ENCODE measurements at regions of chr11 and their contacts with region 1.

Region 1: GRCh38 chr11:2532704-2533586 is 88.1 kb downstream of the KCNQ1 start:
- DNase-seq: peak; percentile 86 to 97 (median 92)
- ATAC-seq: peak; percentile 89
- H3K4me3 ChIP-seq: peak overlapping the region; percentile 33
- H3K4me3 Mint-ChIP-seq: peak overlapping the region; percentile 77
- H3K27ac ChIP-seq: no peak overlapping the region
- H3K27ac Mint-ChIP-seq: no peak overlapping the region
- H3K4me1 ChIP-seq: peaks cover 31% of the 10 kb centered on the region
- H3K4me1 Mint-ChIP-seq: peaks cover 25% of the 10 kb centered on the region
- H3K27me3 ChIP-seq: no peaks in the 10 kb centered on the region
- H3K27me3 Mint-ChIP-seq: no peaks in the 10 kb centered on the region
- CTCF ChIP-seq: peak; percentile 99

Region 2: DNA sequence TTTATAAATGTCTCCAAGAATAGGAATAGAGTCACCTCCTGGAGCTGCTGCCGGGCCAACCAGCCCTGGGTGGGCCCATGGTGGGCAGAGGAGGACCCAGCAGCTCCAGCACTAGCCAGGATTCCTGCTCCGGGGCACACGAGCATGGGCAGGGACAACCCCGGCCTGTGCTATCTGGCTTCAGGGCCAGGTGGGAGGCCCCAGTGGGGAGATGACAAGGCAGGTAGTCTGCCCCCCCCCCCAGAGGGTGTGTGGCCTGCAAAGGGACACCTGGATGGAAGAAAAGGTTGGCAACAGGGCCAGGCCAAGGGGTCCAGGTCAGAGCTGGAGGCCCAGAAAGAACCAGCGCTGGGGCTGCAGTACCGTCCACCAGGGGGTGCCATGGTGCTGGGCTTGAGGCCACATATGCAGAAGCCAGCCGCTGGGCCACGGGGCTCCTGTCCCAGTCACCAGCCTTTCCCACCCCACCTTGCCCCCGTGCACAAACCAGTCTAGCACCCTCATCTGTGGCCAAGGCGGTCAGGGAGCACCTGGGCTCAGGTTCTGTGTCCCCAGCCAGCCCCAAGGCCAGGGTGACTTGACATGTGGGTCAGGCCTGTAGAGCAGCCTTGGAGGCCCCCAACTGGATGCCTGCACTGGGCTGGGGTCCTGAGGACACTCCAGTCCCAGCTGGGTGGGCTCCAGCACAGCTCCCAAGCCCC is 227.7 kb before region 1 on chr11:
- CTCF ChIA-PET with region 1: interaction called, 9 read pairs
- POLR2A ChIA-PET with region 1: no interaction called
- intact Hi-C with region 1: loop called in 1 of 2 experiments (anchors 2 kb)
- DNase-seq: peak; percentile 61 to 93 (median 82)
- ATAC-seq: peak; percentile 23
- H3K4me3 ChIP-seq: peak overlapping the region; percentile 47
- H3K4me3 Mint-ChIP-seq: peak overlapping the region; percentile 80
- H3K27ac ChIP-seq: peak overlapping the region; percentile 40 to 72
- H3K27ac Mint-ChIP-seq: peak overlapping the region; percentile 94
- H3K4me1 ChIP-seq: peaks cover 71% of the 10 kb centered on the region
- H3K4me1 Mint-ChIP-seq: peaks cover 60% of the 10 kb centered on the region
- H3K27me3 ChIP-seq: no peaks in the 10 kb centered on the region
- H3K27me3 Mint-ChIP-seq: no peaks in the 10 kb centered on the region
- CTCF ChIP-seq: peak; percentile 50

Region 3: GRCh38 chr11:2444821-2445745 is 87.9 kb before region 1 on chr11 and contains the start of gene KCNQ1:
- CTCF ChIA-PET with region 1: interaction called, 19 read pairs
- POLR2A ChIA-PET with region 1: interaction called, 5 read pairs
- intact Hi-C with region 1: loop called in 1 of 2 experiments (anchors 5 kb)
- DNase-seq: peak in 7 of 14 experiments; percentile 11 to 80 (median 52)
- ATAC-seq: peak; percentile 22
- H3K4me3 ChIP-seq: peak within 1 kb of the TSS; percentile 75
- H3K4me3 Mint-ChIP-seq: peak within 1 kb of the TSS; percentile 96
- H3K27ac ChIP-seq: peak within 1 kb of the TSS in 1 of 2 donors; percentile 4
- H3K27ac Mint-ChIP-seq: peak within 1 kb of the TSS; percentile 86
- H3K4me1 ChIP-seq: peaks cover 70% of the 10 kb centered on the region
- H3K4me1 Mint-ChIP-seq: peaks cover 50% of the 10 kb centered on the region
- H3K27me3 ChIP-seq: no peaks in the 10 kb centered on the region
- H3K27me3 Mint-ChIP-seq: no peaks in the 10 kb centered on the region
- CTCF ChIP-seq: no peak
- total RNA-seq, gene KCNQ1: 31.3 to 33.1 TPM

Region 4: GRCh38 chr11:2901854-2902783 is 369.2 kb after region 1 on chr11:
- CTCF ChIA-PET with region 1: interaction called, 10 read pairs
- POLR2A ChIA-PET with region 1: interaction called, 5 read pairs
- intact Hi-C with region 1: no loop called
- DNase-seq: peak; percentile 71 to 96 (median 87)
- ATAC-seq: peak; percentile 83
- H3K4me3 ChIP-seq: peak overlapping the region; percentile 69
- H3K4me3 Mint-ChIP-seq: peak overlapping the region; percentile 86
- H3K27ac ChIP-seq: peak overlapping the region; percentile 18 to 50
- H3K27ac Mint-ChIP-seq: peak overlapping the region; percentile 44
- H3K4me1 ChIP-seq: peaks cover 54% of the 10 kb centered on the region
- H3K4me1 Mint-ChIP-seq: peaks cover 49% of the 10 kb centered on the region
- H3K27me3 ChIP-seq: no peaks in the 10 kb centered on the region
- H3K27me3 Mint-ChIP-seq: no peaks in the 10 kb centered on the region
- CTCF ChIP-seq: no peak

Region 5: DNA sequence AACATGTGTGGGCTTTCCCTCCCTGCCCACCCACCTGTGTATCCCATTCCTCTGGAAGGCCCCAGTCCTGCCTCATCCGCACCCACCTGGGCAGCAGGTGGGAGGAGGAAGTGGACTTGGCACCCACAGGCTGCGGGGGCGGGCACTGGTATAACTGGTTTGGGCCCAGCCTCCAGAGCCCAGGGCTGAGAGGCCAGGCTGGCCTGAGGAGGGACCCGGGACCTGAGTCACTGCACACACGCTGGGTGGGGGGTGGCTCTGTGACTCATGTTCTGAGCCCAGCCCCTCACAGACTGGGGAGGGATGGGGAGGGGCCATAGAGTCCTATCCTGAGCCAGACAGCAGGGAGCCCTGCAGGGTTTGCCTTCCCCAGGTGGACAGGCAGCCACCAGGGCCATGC is 379.6 kb after region 1 on chr11:
- CTCF ChIA-PET with region 1: no interaction called
- POLR2A ChIA-PET with region 1: no interaction called
- intact Hi-C with region 1: no loop called
- DNase-seq: peak in 3 of 14 experiments; percentile 31 to 51 (median 38)
- ATAC-seq: no peak
- H3K4me3 ChIP-seq: no peak overlapping the region
- H3K4me3 Mint-ChIP-seq: no peak overlapping the region
- H3K27ac ChIP-seq: no peak overlapping the region
- H3K27ac Mint-ChIP-seq: no peak overlapping the region
- H3K4me1 ChIP-seq: peaks cover 17% of the 10 kb centered on the region
- H3K4me1 Mint-ChIP-seq: peaks cover 12% of the 10 kb centered on the region
- H3K27me3 ChIP-seq: no peaks in the 10 kb centered on the region
- H3K27me3 Mint-ChIP-seq: no peaks in the 10 kb centered on the region
- CTCF ChIP-seq: no peak

Region 6: DNA sequence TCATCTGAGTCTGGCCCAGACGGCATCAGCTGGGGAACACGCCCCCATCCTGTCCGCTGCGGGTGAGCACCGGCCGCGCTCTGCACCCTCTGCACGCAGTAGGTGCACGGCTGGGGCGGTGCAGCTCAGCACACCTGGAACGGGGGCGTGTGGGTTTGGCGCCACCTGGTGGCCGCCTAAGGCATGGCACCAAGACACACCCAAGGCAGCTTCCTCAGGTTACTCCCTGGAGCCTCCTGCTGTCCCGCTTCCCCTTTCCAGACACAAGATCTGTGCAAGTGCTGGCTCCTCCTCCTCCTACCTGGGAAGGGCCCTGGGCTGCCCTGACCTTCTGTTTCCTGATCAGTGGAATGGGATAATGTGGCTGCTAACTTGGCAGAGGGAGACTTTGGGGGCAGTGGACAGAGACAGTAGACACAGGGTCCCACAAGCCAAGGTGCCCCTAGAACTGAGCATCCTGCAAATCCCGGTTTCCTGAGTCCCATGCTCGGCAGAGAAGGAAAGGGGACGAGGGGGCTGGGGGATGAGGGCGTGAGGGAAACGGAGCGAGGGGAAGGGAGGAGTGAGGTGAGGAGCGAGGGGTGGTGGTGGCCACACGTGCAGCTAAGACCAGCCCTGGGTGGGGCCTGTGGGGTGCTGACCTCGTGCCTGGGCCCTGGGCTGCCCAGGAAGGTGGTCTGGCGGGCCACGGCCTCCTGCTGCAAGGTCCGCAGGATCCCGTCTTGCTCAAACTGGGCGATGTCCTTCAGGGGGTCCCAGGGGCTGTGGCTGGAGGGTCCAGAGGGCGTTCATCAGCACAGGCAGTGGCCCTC is 559.1 kb after region 1 on chr11:
- CTCF ChIA-PET with region 1: interaction called, 60 read pairs
- POLR2A ChIA-PET with region 1: interaction called, 4 read pairs
- intact Hi-C with region 1: loop called (anchors 1 kb)
- DNase-seq: peak; percentile 49 to 87 (median 66)
- ATAC-seq: peak; percentile 93
- H3K4me3 ChIP-seq: no peak overlapping the region
- H3K4me3 Mint-ChIP-seq: no peak overlapping the region
- H3K27ac ChIP-seq: no peak overlapping the region
- H3K27ac Mint-ChIP-seq: no peak overlapping the region
- H3K4me1 ChIP-seq: peaks cover 6% of the 10 kb centered on the region
- H3K4me1 Mint-ChIP-seq: no peaks in the 10 kb centered on the region
- H3K27me3 ChIP-seq: peaks cover 0 to 3% of the 10 kb centered on the region in 2 experiments
- H3K27me3 Mint-ChIP-seq: no peaks in the 10 kb centered on the region
- CTCF ChIP-seq: peak; percentile 96

Measured in CD4-positive, alpha-beta T cell (primary cell).